Activated T-helper 1 cell treated with anti-CD3 and anti-CD28 coated beads, Interleukin-12 subunit alpha, Interleukin-12 subunit beta, Interleukin-2, Interleukin-4 antibody, amounts not matched to agents 30 ng/mL and 10 ng/mL and 1 ng/mL, durations not matched to agents 14 hours and 24 hours and 36 hours (primary cell): ENCODE measurements at regions of chr16 and their contacts with region 1.

Region 1: DNA sequence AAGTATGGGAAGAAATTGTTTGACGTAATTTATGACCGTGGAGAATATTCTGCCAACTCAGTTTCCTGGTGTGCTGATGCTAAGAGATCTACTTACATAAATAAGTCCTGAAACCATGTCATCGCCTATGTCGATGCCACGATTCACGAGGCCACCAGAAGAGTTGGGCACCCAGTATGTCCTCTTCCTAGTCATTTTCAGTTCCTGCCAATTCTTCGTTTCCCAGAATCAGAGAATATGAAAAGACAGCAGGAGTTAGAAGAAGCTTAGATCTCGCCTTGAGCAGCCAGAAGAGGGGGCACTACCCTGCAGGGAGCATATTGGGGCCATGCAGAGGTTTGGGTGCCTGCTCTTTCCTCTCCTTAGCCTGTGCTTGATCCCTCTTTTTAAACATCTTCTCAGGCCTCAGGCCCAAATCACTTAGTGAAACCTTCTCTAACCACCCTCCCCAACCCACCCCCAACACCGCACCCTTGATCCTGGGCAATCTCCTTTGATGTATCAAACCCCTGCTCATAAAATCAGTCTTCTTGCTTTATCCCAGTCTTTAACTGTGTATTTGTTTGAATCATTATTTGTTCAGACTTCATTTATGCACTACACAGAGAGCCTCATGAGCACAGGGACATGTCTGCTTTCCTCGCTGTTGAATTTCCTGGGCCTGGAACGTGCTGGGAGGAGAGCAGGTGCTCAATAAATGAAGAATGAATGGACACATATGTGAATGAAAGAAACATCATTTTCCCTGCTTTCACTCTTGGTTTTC is 12.2 kb upstream of the LONP2 start:
- DNase-seq: peak; percentile 28
- H3K4me3 Mint-ChIP-seq: no peak overlapping the region
- H3K27ac Mint-ChIP-seq: peak overlapping the region; percentile 55
- H3K4me1 Mint-ChIP-seq: peaks cover 25% of the 10 kb centered on the region
- H3K27me3 Mint-ChIP-seq: peaks cover 14% of the 10 kb centered on the region

Region 2: DNA sequence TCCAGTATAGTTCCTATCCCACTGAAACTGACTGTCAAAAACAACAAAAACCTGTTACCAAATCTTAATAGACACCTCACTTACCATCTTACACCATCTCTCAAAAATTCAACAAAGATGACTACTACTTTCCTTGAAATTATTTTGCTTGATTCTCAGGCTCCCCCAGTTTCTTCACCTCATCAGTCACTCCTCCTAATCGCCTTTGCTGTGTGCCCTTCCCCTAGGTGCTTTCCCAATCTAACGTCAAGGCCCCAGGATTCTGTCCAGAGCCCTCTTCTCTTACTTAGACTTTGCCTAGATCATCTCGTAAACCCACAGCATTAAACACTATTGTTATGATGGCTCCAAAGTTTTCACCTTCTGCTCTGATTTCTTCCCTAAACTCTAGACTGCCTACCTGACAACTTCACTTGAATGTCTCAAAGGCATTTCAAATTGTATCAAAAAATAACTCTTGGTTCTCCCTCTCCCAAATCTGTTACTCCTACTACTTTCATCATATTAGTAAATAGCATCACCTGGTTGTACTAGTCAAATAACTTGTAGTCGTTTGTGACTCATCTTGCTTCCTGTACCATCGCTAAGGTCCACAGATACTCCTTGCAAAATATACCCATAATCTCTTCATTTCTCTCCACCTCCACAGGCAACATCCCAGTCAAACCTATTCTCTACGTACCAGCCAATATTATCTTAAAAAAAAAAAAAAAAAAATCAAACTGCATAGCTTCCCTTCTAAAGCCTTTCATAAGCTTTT is 1418.9 kb before region 1 on chr16:
- intact Hi-C with region 1: loop called (anchors 5 kb)
- DNase-seq: no peak
- H3K4me3 Mint-ChIP-seq: peak overlapping the region; percentile 6
- H3K27ac Mint-ChIP-seq: peak overlapping the region; percentile 86
- H3K4me1 Mint-ChIP-seq: peaks cover 48% of the 10 kb centered on the region
- H3K27me3 Mint-ChIP-seq: no peaks in the 10 kb centered on the region

Region 3: GRCh38 chr16:48244080-48244862 is 12.4 kb after region 1 on chr16 and contains the start of gene LONP2:
- intact Hi-C with region 1: loop called (anchors 1 kb)
- DNase-seq: peak; percentile 90
- H3K4me3 Mint-ChIP-seq: peak within 1 kb of the TSS; percentile 92
- H3K27ac Mint-ChIP-seq: peak within 1 kb of the TSS; percentile 93
- H3K4me1 Mint-ChIP-seq: peaks cover 27% of the 10 kb centered on the region
- H3K27me3 Mint-ChIP-seq: peaks cover 2% of the 10 kb centered on the region
- total RNA-seq, gene LONP2: 52.2 and 55.7 TPM in 2 replicates

Region 4: DNA sequence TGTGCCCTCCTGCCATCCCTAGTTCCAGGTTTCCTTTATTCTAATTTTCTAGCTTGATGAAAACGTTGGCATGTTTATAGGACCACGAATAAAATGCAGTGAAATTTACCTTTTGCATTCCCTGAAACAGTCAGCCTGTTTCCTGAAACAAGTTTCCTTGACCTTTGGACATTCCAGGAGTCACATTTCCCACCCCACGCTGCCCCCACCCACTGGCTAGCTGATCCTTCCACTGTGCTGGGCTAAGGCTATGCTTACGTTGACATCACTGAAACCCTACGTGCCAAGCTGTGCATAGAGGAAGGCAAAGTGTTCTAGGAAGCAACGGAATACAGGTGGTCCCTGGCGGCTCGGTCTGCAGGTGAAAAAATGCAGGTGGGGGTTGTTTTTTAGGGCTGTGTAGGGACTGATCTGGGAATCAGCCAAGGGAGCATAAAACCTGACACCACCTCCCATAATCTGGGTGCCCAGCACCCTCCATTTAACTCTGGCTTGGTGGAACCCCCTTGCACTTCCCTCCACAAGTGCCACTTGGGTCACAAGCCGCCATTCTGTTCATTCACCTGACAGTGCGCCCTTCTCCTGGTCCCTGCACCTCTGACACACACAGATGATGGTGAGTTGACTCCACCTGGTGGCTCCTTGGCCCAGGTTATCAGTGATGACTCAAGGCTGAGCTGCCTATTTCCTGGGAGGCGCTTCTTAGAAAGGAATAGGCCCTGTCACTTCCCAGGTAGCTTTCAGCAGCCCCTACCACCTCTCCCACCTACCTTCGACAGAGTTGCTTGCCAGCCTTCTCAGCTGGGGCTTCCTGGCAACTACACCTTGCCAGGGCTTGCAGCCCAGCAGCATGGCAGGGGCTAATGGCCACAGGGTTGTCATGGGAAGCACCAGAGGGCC is 294.4 kb after region 1 on chr16:
- intact Hi-C with region 1: loop called (anchors 1 kb)
- DNase-seq: no peak
- H3K4me3 Mint-ChIP-seq: no peak overlapping the region
- H3K27ac Mint-ChIP-seq: no peak overlapping the region
- H3K4me1 Mint-ChIP-seq: peaks cover 7% of the 10 kb centered on the region
- H3K27me3 Mint-ChIP-seq: no peaks in the 10 kb centered on the region

Region 5: GRCh38 chr16:48632137-48632774 is 400.3 kb after region 1 on chr16:
- intact Hi-C with region 1: loop called (anchors 1 kb)
- DNase-seq: no peak
- H3K4me3 Mint-ChIP-seq: no peak overlapping the region
- H3K27ac Mint-ChIP-seq: no peak overlapping the region
- H3K4me1 Mint-ChIP-seq: peaks cover 11% of the 10 kb centered on the region
- H3K27me3 Mint-ChIP-seq: peaks cover 11% of the 10 kb centered on the region